ENCODE measurements at regions of chr9 and their contacts with region 1.

Region 1: GRCh38 chr9:4984621-4985385 is at the start of gene JAK2:
- DNase-seq: peak; percentile 75 to 97 (median 86)

Region 2: DNA sequence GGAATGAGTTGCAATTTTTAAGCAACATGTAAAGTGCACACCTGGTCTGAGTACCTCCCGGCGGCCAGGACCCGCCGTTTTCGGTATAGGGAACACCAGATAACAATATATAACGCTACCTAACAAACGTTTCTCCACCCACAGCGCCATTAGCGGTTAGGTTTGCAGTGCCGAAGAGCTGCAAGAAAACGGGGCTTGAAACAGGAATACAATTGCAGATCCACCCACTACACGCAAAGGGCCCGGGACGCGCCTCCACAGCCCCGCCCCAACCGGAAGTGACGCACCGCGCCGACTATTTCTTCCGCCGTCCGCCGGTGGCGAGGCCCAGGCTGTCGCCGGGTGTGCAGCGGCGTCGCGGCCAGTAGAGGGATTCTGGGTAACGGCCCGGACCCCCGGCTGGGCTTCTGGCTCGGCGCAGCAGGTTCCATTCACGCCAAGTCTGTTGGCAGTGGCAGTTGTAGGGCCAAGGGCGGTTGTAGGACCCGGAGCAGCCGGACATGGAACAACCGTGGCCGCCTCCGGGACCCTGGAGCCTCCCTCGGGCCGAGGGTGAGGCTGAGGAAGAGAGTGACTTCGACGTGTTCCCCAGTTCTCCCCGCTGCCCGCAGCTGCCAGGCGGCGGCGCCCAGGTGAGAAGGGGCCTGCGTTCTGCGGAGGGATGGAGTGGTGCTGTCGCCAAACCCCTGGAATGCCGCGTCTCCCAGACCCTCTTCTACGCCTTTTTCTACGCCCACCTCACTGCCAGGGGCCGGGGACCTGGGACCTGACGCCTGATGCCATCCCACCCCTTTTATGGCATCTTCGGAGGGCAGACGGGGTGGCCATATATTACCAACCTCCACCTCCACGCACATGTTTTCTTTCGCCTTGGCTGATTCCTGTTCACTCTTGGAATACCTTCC is 305.3 kb before region 1 on chr9 and contains the start of gene CDC37L1:
- intact Hi-C with region 1: loop called (anchors 10 kb)
- DNase-seq: peak; percentile 96 to 100 (median 98)

Region 3: GRCh38 chr9:4762108-4762885 is 222.5 kb before region 1 on chr9:
- intact Hi-C with region 1: loop called (anchors 1 kb)
- DNase-seq: peak in 9 of 10 donors; percentile 37 to 94 (median 75)

Region 4: DNA sequence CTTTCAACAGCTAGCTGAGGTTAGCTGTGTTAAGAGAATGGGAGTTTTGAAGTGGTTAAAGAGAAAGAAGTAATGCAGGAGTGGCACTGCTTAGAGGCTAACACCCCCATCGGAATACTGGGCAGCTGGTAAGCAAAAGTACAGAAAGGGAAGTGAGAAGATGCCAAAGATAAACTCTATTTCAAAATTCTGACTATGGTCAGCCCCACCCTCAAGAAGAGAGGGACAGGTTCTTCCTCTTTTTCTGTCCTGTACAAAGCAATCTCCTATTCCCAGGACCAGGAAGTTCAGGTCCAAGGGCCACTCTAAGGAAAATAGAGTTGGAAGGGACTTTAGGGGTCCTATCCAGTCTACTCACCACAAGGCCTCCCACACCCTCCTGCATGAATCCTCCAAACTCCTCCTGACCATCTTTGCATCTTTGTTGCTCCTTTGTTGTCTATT is 45.7 kb before region 1 on chr9:
- intact Hi-C with region 1: loop called (anchors 10 kb)
- DNase-seq: no peak

Region 5: DNA sequence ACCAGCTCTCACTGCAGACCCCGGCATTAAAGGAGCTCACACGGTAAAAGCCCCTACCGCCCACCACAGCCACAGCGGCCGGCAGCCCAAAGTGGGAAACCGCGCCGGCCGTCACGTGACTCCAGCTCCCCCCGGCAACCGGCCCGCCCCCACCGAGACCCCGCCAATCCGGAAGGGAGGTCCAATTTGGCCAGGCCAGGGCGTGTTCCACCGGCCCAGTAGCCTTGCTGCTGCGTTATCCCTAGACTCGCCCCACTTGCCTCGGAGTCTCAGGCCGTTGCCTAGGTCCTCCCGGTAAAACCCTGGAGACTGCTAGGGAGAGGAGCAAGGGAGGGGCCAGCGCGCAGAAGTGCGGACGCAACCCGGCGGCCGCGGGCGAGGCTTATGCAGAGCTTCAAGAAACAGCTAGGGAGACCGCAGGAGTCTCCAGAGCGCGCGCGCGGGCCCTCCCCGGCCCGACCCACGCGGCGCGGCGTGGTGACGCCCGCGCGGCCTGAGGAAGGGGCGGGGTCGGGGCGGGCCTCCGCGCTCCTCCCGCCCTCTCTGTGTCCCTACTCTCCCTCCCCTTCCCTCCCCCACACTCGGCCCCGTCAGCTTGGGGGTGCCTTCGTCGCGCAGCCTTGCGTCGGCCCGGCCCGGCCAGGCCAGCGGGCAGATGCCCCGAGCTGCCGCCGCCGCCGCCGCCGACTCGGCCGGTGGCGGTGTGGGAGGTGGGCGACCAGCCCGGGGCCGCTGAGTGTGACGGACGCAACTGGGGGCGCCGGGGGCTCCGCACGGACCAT is 643.9 kb after region 1 on chr9 and contains the start of gene RIC1:
- intact Hi-C with region 1: loop called (anchors 2 kb)
- DNase-seq: peak; percentile 81 to 98 (median 88)

Measured in posterior cingulate gyrus (tissue), 11 donors.